ENCODE measurements at regions of chr1 and their contacts with region 1.

Region 1: GRCh38 chr1:224528900-224529299 is 87.2 kb upstream of the CNIH3 start:
- DNase-seq: no peak
- ATAC-seq: no peak
- H3K4me3 ChIP-seq: no peak overlapping the region
- H3K27ac ChIP-seq: no peak overlapping the region
- H3K4me1 ChIP-seq: no peaks in the 10 kb centered on the region
- H3K27me3 ChIP-seq: no peaks in the 10 kb centered on the region
- CTCF ChIP-seq: no peak
- EP300 ChIP-seq: no peak
- POLR2A ChIP-seq: no peak
- RAD21 ChIP-seq: no peak

Region 2: GRCh38 chr1:224720226-224720625 is 191.3 kb after region 1 on chr1:
- CTCF ChIA-PET with region 1: no interaction called
- POLR2A ChIA-PET with region 1: no interaction called
- RAD21 ChIA-PET with region 1: no interaction called
- SMC1A ChIA-PET with region 1: no interaction called
- in situ Hi-C with region 1: no loop called
- intact Hi-C with region 1: no loop called
- DNase-seq: no peak
- ATAC-seq: no peak
- H3K4me3 ChIP-seq: no peak overlapping the region
- H3K27ac ChIP-seq: no peak overlapping the region
- H3K4me1 ChIP-seq: no peaks in the 10 kb centered on the region
- H3K27me3 ChIP-seq: no peaks in the 10 kb centered on the region
- CTCF ChIP-seq: no peak
- EP300 ChIP-seq: no peak
- POLR2A ChIP-seq: no peak
- RAD21 ChIP-seq: no peak

Region 3: DNA sequence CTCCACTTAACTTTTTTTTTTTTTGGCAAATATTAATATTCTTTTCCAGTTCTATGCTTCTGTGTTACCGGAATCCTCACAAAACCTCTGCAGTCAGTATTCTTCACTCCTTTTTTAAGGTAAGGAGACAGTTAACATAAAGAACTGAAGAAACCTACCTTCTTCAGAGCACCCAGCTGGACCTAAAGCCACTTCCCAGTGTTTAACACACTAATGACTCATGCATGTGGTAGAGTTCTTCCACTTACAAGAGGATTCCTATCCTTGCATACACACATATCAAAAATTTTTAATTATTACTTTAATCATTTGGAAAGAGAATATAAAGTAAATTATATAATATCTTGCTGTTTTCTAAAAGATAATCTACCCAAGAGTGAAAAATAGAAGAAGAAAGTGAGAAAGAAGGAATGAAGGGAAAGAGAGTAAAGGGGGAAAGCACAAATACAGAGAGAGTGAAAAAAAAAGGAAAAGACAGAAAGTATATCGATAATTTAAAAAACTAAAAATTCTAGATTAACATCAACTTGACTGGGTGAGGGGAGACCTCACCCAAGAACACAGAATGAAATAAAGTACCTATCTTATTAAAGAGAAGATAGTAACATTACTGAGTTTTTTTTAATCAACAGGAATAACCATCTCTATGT is 1069.2 kb after region 1 on chr1:
- CTCF ChIA-PET with region 1: no interaction called
- POLR2A ChIA-PET with region 1: no interaction called
- RAD21 ChIA-PET with region 1: no interaction called
- SMC1A ChIA-PET with region 1: no interaction called
- in situ Hi-C with region 1: no loop called
- intact Hi-C with region 1: loop called (anchors 10 kb)
- DNase-seq: no peak
- ATAC-seq: no peak
- H3K4me3 ChIP-seq: no peak overlapping the region
- H3K27ac ChIP-seq: no peak overlapping the region
- H3K4me1 ChIP-seq: no peaks in the 10 kb centered on the region
- H3K27me3 ChIP-seq: no peaks in the 10 kb centered on the region
- CTCF ChIP-seq: no peak
- EP300 ChIP-seq: no peak
- POLR2A ChIP-seq: no peak
- RAD21 ChIP-seq: no peak